Psoas muscle (tissue), 8 donors: ENCODE measurements at regions of chr10 and their contacts with region 1.

Region 1: DNA sequence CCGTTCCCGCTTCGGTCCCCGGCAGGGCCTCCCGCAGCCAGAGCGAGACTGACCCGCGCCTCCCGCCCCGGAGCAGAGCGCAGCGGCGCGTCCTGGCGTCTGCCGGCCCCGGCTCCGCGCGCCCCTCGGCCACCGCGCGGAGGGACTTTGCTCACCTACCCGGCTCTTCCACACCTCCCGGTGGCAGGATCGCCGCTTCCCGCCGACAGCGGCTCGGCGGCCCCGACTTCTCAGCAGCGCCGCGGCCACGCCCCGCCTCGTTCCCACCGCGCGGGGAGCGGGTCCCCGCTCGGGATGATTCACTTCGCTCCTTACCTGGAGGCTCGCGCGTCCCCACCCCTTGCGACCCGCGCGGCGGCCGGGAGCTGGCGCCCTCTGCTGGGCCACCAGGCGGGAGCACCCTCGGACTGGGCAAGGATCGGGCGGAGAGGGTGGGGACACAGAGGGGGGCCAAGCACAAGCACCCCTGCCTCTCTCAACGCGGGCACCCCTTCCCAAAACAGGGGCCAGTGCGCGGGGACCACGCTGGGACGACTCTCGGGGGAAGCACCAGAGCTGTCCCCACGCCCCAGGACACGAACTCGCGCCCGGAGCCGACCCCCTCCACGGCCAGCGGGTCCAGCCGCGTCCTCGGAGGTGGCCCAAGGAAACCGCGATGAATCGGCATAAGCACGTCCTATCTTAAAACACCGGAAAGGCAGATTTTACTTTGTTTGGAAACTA is 101.0 kb upstream of the SVIL start:
- DNase-seq: peak; percentile 86 to 95
- ATAC-seq: peak; percentile 83 to 90 (median 86)
- H3K4me3 ChIP-seq: peak overlapping the region; percentile 94
- H3K27ac ChIP-seq: peak overlapping the region; percentile 98
- H3K4me1 ChIP-seq: peaks cover 33% of the 10 kb centered on the region
- H3K27me3 ChIP-seq: no peaks in the 10 kb centered on the region
- CTCF ChIP-seq: peak; percentile 87

Region 2: GRCh38 chr10:29039677-29040189 is 696.0 kb before region 1 on chr10:
- intact Hi-C with region 1: no loop called
- DNase-seq: no peak
- ATAC-seq: no peak
- H3K4me3 ChIP-seq: no peak overlapping the region
- H3K27ac ChIP-seq: no peak overlapping the region
- H3K4me1 ChIP-seq: no peaks in the 10 kb centered on the region
- H3K27me3 ChIP-seq: peaks cover 0 to 6% (median 0%) of the 10 kb centered on the region in 3 donors
- CTCF ChIP-seq: no peak

Region 3: GRCh38 chr10:29535012-29535777 is 200.6 kb before region 1 on chr10:
- intact Hi-C with region 1: loop called in 1 of 2 experiments (anchors 10 kb)
- DNase-seq: peak in 1 of 2 donors; percentile 60
- ATAC-seq: peak; percentile 24 to 68 (median 58)
- H3K4me3 ChIP-seq: peak overlapping the region; percentile 16
- H3K27ac ChIP-seq: peak overlapping the region; percentile 76
- H3K4me1 ChIP-seq: peaks cover 84% of the 10 kb centered on the region
- H3K27me3 ChIP-seq: no peaks in the 10 kb centered on the region
- CTCF ChIP-seq: peak; percentile 57

Region 4: GRCh38 chr10:29784175-29784773 is 48.5 kb after region 1 on chr10:
- intact Hi-C with region 1: loop called (anchors 5 kb)
- DNase-seq: peak; percentile 63 to 79
- ATAC-seq: peak; percentile 94 to 98 (median 98)
- H3K4me3 ChIP-seq: no peak overlapping the region
- H3K27ac ChIP-seq: peak overlapping the region; percentile 89
- H3K4me1 ChIP-seq: peaks cover 16% of the 10 kb centered on the region
- H3K27me3 ChIP-seq: no peaks in the 10 kb centered on the region
- CTCF ChIP-seq: no peak

Region 5: GRCh38 chr10:29811751-29812449 is 76.1 kb after region 1 on chr10:
- intact Hi-C with region 1: loop called (anchors 2 to 5 kb)
- DNase-seq: peak; percentile 33 to 65
- ATAC-seq: peak; percentile 92
- H3K4me3 ChIP-seq: peak overlapping the region; percentile 31
- H3K27ac ChIP-seq: peak overlapping the region; percentile 84
- H3K4me1 ChIP-seq: peaks cover 48% of the 10 kb centered on the region
- H3K27me3 ChIP-seq: no peaks in the 10 kb centered on the region
- CTCF ChIP-seq: no peak

Region 6: GRCh38 chr10:29946953-29947700 is 211.4 kb after region 1 on chr10:
- intact Hi-C with region 1: loop called in 1 of 2 experiments (anchors 10 kb)
- DNase-seq: peak; percentile 70 to 84
- ATAC-seq: peak; percentile 87 to 92 (median 90)
- H3K4me3 ChIP-seq: peak overlapping the region; percentile 43
- H3K27ac ChIP-seq: peak overlapping the region; percentile 96
- H3K4me1 ChIP-seq: peaks cover 49% of the 10 kb centered on the region
- H3K27me3 ChIP-seq: no peaks in the 10 kb centered on the region
- CTCF ChIP-seq: no peak

Region 7: DNA sequence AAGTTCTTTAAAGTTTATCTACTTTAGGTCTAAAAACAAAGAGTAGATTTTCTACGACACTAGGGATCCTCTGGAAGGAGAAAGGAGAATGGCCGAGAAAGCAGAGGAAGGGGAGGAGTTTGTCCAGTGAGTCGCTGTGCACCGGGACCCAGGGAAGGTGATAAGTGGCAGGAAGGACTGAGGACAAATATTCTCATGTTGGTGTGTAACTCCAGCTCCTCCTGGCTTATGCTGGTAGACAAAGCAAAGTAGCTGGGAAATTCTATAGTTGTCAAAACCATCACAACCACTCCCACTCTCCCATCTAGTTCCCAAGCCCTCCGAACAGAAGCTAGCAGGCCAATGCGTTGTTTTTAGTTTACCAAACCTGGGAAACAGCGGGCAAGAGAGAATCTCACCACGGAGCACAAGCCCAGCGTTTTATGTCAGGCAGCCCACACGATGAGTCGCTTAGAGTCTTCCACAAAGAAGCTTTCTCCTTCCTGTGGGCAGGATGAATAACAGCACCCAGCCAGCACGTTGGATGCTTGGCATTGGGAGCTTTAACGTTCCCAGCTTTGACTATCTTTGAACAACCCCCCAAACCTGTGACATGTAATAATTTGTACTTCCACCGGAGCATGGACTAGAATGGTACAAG is 356.5 kb after region 1 on chr10:
- intact Hi-C with region 1: no loop called
- DNase-seq: no peak
- ATAC-seq: no peak
- H3K4me3 ChIP-seq: no peak overlapping the region
- H3K27ac ChIP-seq: no peak overlapping the region
- H3K4me1 ChIP-seq: no peaks in the 10 kb centered on the region
- H3K27me3 ChIP-seq: no peaks in the 10 kb centered on the region
- CTCF ChIP-seq: no peak